ENCODE measurements at regions of chr5 and their contacts with region 1.

Region 1: DNA sequence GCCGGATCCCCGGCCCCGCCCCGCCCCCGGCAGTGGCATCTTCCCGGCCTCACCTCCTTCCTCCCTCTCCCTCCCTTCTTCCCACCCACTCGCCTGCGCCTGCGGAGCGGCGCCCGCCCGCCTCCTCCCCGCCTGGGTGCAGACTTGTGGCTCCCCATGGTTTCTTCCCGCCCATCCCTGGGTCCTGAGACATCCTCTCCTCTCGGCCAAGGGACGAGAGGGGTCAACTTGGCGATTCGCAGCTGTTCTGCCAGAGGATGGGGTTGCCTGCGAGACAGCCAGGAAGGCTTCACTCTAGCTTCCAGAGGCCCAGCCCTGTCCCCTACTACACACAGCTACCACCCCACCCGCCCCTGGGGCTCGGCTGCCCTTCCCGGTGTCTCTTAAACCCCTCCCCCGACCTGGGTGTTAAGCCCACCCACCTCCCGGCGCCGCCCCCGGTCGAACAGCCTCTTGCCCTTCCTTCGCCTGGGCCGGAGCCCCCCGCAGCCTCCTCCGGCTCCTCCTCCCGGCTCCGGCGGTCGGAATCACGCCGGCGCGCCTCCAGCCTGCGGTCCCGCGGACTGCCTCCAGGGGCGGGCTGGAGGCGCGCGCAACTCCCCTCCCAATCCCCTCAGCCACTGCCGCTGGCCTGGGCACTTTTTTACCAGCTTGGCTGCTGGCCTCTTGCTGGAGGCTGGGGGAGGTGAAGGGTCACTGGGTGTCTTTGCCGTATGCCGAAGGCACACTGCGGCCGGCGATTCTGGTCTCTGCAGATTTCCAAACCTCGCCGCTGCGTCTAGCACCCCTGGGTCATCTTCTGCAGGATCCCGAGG is 1.9 kb downstream of the JADE2 start:
- DNase-seq: peak; percentile 58 to 73 (median 62)
- H3K4me3 ChIP-seq: peak overlapping the region; percentile 77 to 80
- H3K4me3 Mint-ChIP-seq: peak overlapping the region; percentile 94 to 98 (median 97)
- H3K27ac ChIP-seq: peak overlapping the region; percentile 96
- H3K27ac Mint-ChIP-seq: peak overlapping the region; percentile 82 to 99 (median 92)
- H3K4me1 ChIP-seq: peaks cover 60% of the 10 kb centered on the region
- H3K4me1 Mint-ChIP-seq: peaks cover 40 to 80% (median 49%) of the 10 kb centered on the region in 4 donors
- H3K27me3 ChIP-seq: no peaks in the 10 kb centered on the region
- H3K27me3 Mint-ChIP-seq: peaks cover 0 to 2% of the 10 kb centered on the region in 2 donors

Region 2: GRCh38 chr5:134176511-134177368 is 350.6 kb before region 1 on chr5 and contains the start of gene SKP1:
- CTCF ChIA-PET with region 1: no interaction called
- POLR2A ChIA-PET with region 1: interaction called, 6 read pairs
- intact Hi-C with region 1: loop called (anchors 10 kb)
- DNase-seq: peak; percentile 81 to 94 (median 91)
- H3K4me3 ChIP-seq: peak within 1 kb of the TSS; percentile 71 to 89
- H3K4me3 Mint-ChIP-seq: peak within 1 kb of the TSS; percentile 98 to 99 (median 98)
- H3K27ac ChIP-seq: peak within 1 kb of the TSS; percentile 97
- H3K27ac Mint-ChIP-seq: peak within 1 kb of the TSS; percentile 97 to 99 (median 98)
- H3K4me1 ChIP-seq: peaks cover 41% of the 10 kb centered on the region
- H3K4me1 Mint-ChIP-seq: peaks cover 21 to 46% (median 30%) of the 10 kb centered on the region in 4 donors
- H3K27me3 ChIP-seq: no peaks in the 10 kb centered on the region
- H3K27me3 Mint-ChIP-seq: no peaks in the 10 kb centered on the region
- total RNA-seq, gene SKP1: 234 to 246 TPM

Region 3: GRCh38 chr5:134370871-134371833 is 156.2 kb before region 1 on chr5 and contains the start of gene UBE2B:
- CTCF ChIA-PET with region 1: interaction called, 6 read pairs
- POLR2A ChIA-PET with region 1: interaction called, 159 read pairs
- intact Hi-C with region 1: loop called (anchors 1 kb)
- DNase-seq: peak; percentile 98 to 99 (median 98)
- H3K4me3 ChIP-seq: peak within 1 kb of the TSS; percentile 86 to 92
- H3K4me3 Mint-ChIP-seq: peak within 1 kb of the TSS; percentile 96 to 99 (median 98)
- H3K27ac ChIP-seq: peak within 1 kb of the TSS; percentile 99
- H3K27ac Mint-ChIP-seq: peak within 1 kb of the TSS; percentile 97 to 100 (median 100)
- H3K4me1 ChIP-seq: peaks cover 52% of the 10 kb centered on the region
- H3K4me1 Mint-ChIP-seq: peaks cover 40 to 78% (median 49%) of the 10 kb centered on the region in 4 donors
- H3K27me3 ChIP-seq: no peaks in the 10 kb centered on the region
- H3K27me3 Mint-ChIP-seq: peaks cover 0 to 5% of the 10 kb centered on the region in 2 donors
- total RNA-seq, gene UBE2B: 121 to 124 TPM

Region 4: DNA sequence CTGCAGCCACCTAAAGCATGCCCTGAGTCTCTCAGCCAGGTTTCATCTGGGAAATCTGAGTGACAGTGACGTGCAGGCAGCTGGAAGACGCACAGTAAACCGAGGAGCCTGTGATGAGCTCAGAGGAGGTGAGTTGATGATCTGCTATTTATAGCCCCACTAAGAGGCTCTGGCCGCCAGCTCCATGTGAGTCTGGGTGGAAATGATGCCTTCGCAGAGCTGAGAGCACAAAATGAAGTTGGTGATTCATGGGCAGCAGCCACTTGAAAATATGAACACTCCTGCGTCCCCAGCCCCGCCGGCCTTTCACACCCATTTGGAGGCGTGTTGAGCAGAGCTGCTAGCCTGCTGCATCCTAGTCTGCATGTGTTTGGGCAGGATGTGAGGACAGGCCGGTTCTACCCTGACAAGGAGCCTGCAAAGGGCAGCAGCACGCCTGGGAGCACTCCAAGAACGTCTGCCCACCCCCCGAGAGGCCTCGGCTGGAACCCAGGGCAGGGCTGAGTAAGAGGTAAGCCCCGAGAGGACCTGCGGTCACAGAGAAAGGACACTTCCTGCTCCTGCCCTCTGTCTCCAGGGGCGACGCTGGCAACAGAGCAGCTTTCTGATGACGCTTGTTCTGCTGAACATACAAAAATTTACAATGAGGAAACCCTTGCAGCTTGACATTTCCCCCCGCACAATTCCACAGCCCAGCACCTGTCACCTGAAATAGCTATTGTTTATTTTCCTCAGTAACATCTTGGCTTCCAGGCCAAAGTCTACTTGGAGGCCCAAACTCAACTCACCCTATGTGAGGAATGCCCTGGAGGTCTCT is 90.6 kb before region 1 on chr5:
- CTCF ChIA-PET with region 1: interaction called, 3 read pairs
- POLR2A ChIA-PET with region 1: interaction called, 37 read pairs
- intact Hi-C with region 1: no loop called
- DNase-seq: peak; percentile 54 to 79 (median 70)
- H3K4me3 ChIP-seq: peak overlapping the region in 1 of 2 donors; percentile 23
- H3K4me3 Mint-ChIP-seq: peak overlapping the region; percentile 36 to 72 (median 70)
- H3K27ac ChIP-seq: peak overlapping the region; percentile 35
- H3K27ac Mint-ChIP-seq: peak overlapping the region; percentile 84 to 96 (median 91)
- H3K4me1 ChIP-seq: peaks cover 17% of the 10 kb centered on the region
- H3K4me1 Mint-ChIP-seq: peaks cover 9 to 19% (median 14%) of the 10 kb centered on the region in 4 donors
- H3K27me3 ChIP-seq: no peaks in the 10 kb centered on the region
- H3K27me3 Mint-ChIP-seq: no peaks in the 10 kb centered on the region

Region 5: DNA sequence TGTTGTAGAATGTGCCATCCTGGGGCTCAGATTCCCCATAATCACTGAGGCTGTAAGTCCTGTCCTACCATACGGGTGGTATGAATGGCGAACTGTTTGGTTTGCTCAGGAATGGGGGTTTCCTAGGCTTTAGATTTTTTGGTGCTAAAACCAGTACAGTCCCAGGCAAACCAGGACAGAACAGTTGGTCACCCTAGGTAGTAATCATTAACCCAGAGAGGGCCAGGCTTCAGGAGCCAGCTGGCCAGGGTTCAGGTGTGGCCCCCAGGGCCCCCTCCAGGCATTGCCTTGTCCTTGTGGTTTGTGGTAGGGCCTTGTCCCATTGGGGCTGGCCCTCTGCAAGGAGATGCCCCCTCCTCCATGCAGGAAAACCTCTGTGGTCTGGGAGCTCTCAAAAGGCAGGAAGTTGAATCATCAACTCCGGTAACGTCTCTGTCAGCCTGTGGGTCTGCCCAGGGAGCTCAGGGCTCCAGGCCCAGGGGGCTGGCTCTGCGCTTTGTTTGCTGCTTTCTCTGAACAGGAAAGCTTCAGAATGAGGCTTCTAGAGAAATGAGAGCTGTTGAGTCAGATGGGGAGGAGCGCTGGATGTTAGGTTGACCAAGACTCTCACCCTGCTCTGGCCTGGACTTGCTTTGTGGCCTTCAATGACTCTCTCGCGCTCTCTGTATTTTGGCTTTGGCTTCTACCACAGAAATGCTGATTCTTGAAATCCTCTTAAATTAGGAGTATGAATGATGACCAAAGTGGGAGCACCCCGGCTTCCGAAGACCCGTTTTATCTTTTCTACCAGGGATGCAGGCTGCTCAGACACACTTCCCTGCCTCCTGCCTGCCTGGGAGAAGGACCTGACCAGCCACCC is 24.0 kb before region 1 on chr5:
- CTCF ChIA-PET with region 1: interaction called, 5 read pairs
- POLR2A ChIA-PET with region 1: interaction called, 24 read pairs
- intact Hi-C with region 1: loop called (anchors 1 kb)
- DNase-seq: peak; percentile 16 to 69 (median 36)
- H3K4me3 ChIP-seq: no peak overlapping the region
- H3K4me3 Mint-ChIP-seq: peak overlapping the region in 7 of 8 donors; percentile 26 to 81 (median 62)
- H3K27ac ChIP-seq: peak overlapping the region; percentile 23
- H3K27ac Mint-ChIP-seq: peak overlapping the region; percentile 86 to 95 (median 91)
- H3K4me1 ChIP-seq: peaks cover 26% of the 10 kb centered on the region
- H3K4me1 Mint-ChIP-seq: peaks cover 14 to 33% (median 24%) of the 10 kb centered on the region in 4 donors
- H3K27me3 ChIP-seq: no peaks in the 10 kb centered on the region
- H3K27me3 Mint-ChIP-seq: no peaks in the 10 kb centered on the region

Region 6: GRCh38 chr5:134555890-134556311 is 28.5 kb after region 1 on chr5:
- CTCF ChIA-PET with region 1: interaction called, 16 read pairs
- POLR2A ChIA-PET with region 1: interaction called, 77 read pairs
- intact Hi-C with region 1: loop called (anchors 1 kb)
- DNase-seq: peak; percentile 72 to 98 (median 79)
- H3K4me3 ChIP-seq: peak overlapping the region in 1 of 2 donors; percentile 14
- H3K4me3 Mint-ChIP-seq: peak overlapping the region in 7 of 8 donors; percentile 46 to 81 (median 63)
- H3K27ac ChIP-seq: peak overlapping the region; percentile 95
- H3K27ac Mint-ChIP-seq: peak overlapping the region; percentile 94 to 99 (median 98)
- H3K4me1 ChIP-seq: peaks cover 44% of the 10 kb centered on the region
- H3K4me1 Mint-ChIP-seq: peaks cover 35 to 53% (median 42%) of the 10 kb centered on the region in 4 donors
- H3K27me3 ChIP-seq: no peaks in the 10 kb centered on the region
- H3K27me3 Mint-ChIP-seq: no peaks in the 10 kb centered on the region

Region 7: DNA sequence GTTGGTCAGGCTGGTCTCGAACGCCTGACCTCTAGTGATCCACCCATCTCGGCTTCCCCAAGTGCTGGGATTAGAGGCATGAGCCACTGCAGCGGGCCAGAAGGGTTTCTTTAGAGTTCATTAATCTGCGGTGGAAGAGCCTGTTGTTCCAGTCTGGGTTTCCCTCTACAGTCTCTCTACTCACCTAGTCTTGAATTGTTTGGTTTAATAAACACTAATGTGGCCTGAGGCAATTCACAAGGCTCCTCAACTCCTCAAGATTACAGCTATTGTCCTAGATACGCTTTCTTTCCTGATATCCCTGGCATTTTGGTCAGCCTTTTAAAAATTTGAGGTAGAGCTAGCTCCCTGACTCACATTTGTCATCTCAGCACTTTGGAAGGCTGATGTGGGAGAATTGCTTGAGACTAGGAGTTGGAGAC is 109.8 kb after region 1 on chr5:
- CTCF ChIA-PET with region 1: no interaction called
- POLR2A ChIA-PET with region 1: interaction called, 4 read pairs
- intact Hi-C with region 1: loop called (anchors 2 kb)
- DNase-seq: no peak
- H3K4me3 ChIP-seq: no peak overlapping the region
- H3K4me3 Mint-ChIP-seq: no peak overlapping the region
- H3K27ac ChIP-seq: no peak overlapping the region
- H3K27ac Mint-ChIP-seq: no peak overlapping the region
- H3K4me1 ChIP-seq: peaks cover 4% of the 10 kb centered on the region
- H3K4me1 Mint-ChIP-seq: peaks cover 0 to 13% (median under 1%) of the 10 kb centered on the region in 4 donors
- H3K27me3 ChIP-seq: no peaks in the 10 kb centered on the region
- H3K27me3 Mint-ChIP-seq: no peaks in the 10 kb centered on the region

Region 8: GRCh38 chr5:134975078-134975715 is 447.8 kb after region 1 on chr5:
- CTCF ChIA-PET with region 1: no interaction called
- POLR2A ChIA-PET with region 1: no interaction called
- intact Hi-C with region 1: no loop called
- DNase-seq: no peak
- H3K4me3 ChIP-seq: no peak overlapping the region
- H3K4me3 Mint-ChIP-seq: no peak overlapping the region
- H3K27ac ChIP-seq: no peak overlapping the region
- H3K27ac Mint-ChIP-seq: no peak overlapping the region
- H3K4me1 ChIP-seq: no peaks in the 10 kb centered on the region
- H3K4me1 Mint-ChIP-seq: no peaks in the 10 kb centered on the region
- H3K27me3 ChIP-seq: no peaks in the 10 kb centered on the region
- H3K27me3 Mint-ChIP-seq: no peaks in the 10 kb centered on the region